SK-N-SH (cell line): ENCODE measurements at regions of chr3 and their contacts with region 1.

Region 1: DNA sequence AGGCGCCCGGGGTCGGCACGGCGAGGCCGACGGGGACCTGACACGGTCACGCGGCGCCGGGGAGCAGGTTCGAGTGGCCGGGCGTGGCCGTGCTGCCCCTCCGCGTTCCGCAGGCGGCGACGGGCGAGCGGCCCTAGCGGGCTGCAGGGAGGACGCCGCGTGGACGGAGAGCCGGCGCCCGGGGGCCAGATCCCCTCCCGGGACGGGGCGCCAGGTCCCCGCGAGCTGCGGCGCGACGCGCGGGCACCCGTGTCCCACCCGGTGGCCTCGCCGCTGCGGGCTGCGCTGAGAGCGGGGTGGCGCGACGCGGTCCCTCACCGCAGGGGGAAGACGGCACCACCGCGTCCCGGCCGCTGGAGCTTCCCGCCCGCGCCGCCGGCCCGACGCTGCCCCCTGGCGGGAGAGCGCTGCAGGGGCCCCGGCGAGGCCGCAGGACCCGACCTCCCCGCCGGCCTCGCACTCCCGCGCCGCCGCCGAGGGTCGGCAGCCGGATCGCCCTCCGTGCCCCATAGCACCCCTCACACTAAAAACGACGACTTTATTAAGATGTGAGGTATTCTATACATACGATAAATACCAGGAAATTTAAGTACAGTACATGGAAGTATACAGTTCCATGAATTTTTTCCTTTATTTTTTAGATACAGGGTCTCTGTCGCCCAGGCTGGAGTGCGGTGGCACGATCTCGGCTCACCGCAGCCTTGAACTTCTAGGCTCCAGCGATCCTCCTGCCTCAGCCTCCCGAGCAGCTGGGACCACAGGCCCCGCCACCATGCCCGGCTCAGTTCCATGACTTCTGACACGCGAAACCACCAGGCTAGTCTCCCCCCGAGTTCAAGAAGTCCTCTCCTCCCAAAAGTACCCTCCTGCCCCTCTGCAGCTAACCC is 1.3 kb upstream of the PIGZ start:
- DNase-seq: peak; percentile 97
- H3K4me3 ChIP-seq: peak overlapping the region; percentile 64 to 76
- H3K27ac ChIP-seq: no peak overlapping the region
- H3K4me1 ChIP-seq: peaks cover 0 to 6% of the 10 kb centered on the region in 2 experiments; a peak in 1 of 4 replicates
- H3K27me3 ChIP-seq: no peaks in the 10 kb centered on the region
- CTCF ChIP-seq: peak; percentile 65
- EP300 ChIP-seq: no peak; a peak in 1 of 4 replicates
- RAD21 ChIP-seq: peak; percentile 65

Region 2: GRCh38 chr3:196609343-196609775 is 360.5 kb before region 1 on chr3:
- CTCF ChIA-PET with region 1: interaction called, 12 read pairs
- POLR2A ChIA-PET with region 1: no interaction called
- DNase-seq: peak; percentile 92
- H3K4me3 ChIP-seq: no peak overlapping the region; a peak in 1 of 4 replicates
- H3K27ac ChIP-seq: no peak overlapping the region
- H3K4me1 ChIP-seq: peaks cover 7 to 9% of the 10 kb centered on the region in 2 experiments; a peak in 2 of 4 replicates
- H3K27me3 ChIP-seq: no peaks in the 10 kb centered on the region
- CTCF ChIP-seq: peak; percentile 85
- EP300 ChIP-seq: no peak
- RAD21 ChIP-seq: peak; percentile 90

Region 3: DNA sequence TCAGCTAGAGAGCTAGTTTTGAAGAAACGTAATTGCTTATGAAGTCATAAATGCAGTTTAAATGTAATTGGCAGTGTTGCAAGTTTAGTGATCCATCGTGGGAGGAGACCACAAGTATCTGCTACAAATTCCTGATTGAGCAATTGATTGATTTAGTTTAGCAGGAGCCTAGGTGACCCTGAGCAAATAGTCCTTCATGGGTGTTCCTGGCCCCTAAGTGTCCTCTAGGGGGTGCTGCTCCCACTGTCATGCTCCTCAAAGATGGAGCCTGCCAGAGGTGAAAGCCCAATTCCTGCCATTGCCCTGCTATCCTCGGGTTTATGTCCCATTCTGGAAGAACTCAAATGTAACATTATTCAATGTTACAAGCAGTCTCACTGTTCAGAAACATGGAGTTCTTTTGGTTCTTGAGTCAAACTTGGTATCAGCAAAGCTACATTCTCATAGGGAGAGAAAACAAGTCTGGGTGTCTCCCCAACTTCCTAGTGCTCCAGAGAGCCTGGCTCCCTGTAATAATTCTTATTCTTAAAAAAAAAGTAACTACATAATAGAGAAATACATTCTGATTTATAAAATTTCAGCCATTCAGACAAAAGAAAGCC is 132.0 kb before region 1 on chr3:
- CTCF ChIA-PET with region 1: interaction called, 12 read pairs
- POLR2A ChIA-PET with region 1: no interaction called
- DNase-seq: peak; percentile 70
- H3K4me3 ChIP-seq: no peak overlapping the region
- H3K27ac ChIP-seq: no peak overlapping the region
- H3K4me1 ChIP-seq: no peaks in the 10 kb centered on the region
- H3K27me3 ChIP-seq: no peaks in the 10 kb centered on the region
- CTCF ChIP-seq: peak; percentile 74
- EP300 ChIP-seq: no peak
- RAD21 ChIP-seq: peak; percentile 66

Region 4: GRCh38 chr3:196942226-196942914 is 27.5 kb before region 1 on chr3 and contains the start of gene NCBP2:
- CTCF ChIA-PET with region 1: interaction called, 16 read pairs
- POLR2A ChIA-PET with region 1: interaction called, 4 read pairs
- DNase-seq: peak; percentile 96
- H3K4me3 ChIP-seq: peak within 1 kb of the TSS; percentile 95 to 96
- H3K27ac ChIP-seq: peak within 1 kb of the TSS; percentile 97 to 99
- H3K4me1 ChIP-seq: peaks cover 6 to 11% of the 10 kb centered on the region in 2 experiments; a peak in 3 of 4 replicates
- H3K27me3 ChIP-seq: no peaks in the 10 kb centered on the region
- CTCF ChIP-seq: peak; percentile 64
- EP300 ChIP-seq: no peak
- RAD21 ChIP-seq: peak; percentile 43
- polyA plus RNA-seq, gene NCBP2: 112 and 128 TPM in 2 replicates

Region 5: GRCh38 chr3:196951371-196951770 is 18.5 kb before region 1 on chr3:
- CTCF ChIA-PET with region 1: interaction called, 26 read pairs
- POLR2A ChIA-PET with region 1: no interaction called
- DNase-seq: no peak
- H3K4me3 ChIP-seq: no peak overlapping the region
- H3K27ac ChIP-seq: no peak overlapping the region
- H3K4me1 ChIP-seq: no peaks in the 10 kb centered on the region
- H3K27me3 ChIP-seq: no peaks in the 10 kb centered on the region
- CTCF ChIP-seq: no peak
- EP300 ChIP-seq: no peak
- RAD21 ChIP-seq: no peak

Region 6: GRCh38 chr3:196989721-196990271 is 19.9 kb after region 1 on chr3:
- CTCF ChIA-PET with region 1: interaction called, 12 read pairs
- POLR2A ChIA-PET with region 1: no interaction called
- DNase-seq: no peak
- H3K4me3 ChIP-seq: no peak overlapping the region
- H3K27ac ChIP-seq: no peak overlapping the region
- H3K4me1 ChIP-seq: peaks cover 0 to 11% of the 10 kb centered on the region in 2 experiments; a peak in 1 of 4 replicates
- H3K27me3 ChIP-seq: no peaks in the 10 kb centered on the region; the same call in 1 of the 2 replicates
- CTCF ChIP-seq: no peak
- EP300 ChIP-seq: no peak
- RAD21 ChIP-seq: no peak

Region 7: DNA sequence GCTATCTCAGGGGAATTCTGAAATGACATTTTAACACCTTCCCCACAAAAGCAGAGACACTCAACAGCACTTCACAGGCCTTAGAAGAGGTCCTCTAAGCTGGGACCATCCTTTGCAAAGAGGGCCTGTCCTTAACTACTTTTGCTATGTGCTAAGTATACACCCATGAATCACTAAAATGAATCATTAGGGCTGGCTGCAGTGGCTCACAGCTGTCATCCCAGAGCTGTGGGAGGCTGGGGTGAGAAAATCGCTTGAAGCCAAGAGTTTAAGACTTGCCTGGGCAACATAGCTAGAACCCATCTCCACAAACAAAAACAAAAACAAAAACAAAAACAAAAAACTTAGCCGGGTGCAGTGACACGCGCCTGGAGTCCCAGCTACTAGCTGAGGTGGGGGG is 113.6 kb after region 1 on chr3:
- CTCF ChIA-PET with region 1: no interaction called
- POLR2A ChIA-PET with region 1: no interaction called
- DNase-seq: no peak
- H3K4me3 ChIP-seq: no peak overlapping the region
- H3K27ac ChIP-seq: peak overlapping the region in 1 of 2 experiments; percentile 71; a peak in 2 of 4 replicates
- H3K4me1 ChIP-seq: peaks cover 0 to 6% of the 10 kb centered on the region in 2 experiments; a peak in 2 of 4 replicates
- H3K27me3 ChIP-seq: no peaks in the 10 kb centered on the region
- CTCF ChIP-seq: no peak
- EP300 ChIP-seq: no peak
- RAD21 ChIP-seq: no peak

Region 8: GRCh38 chr3:197262709-197263108 is 292.8 kb after region 1 on chr3:
- CTCF ChIA-PET with region 1: no interaction called
- POLR2A ChIA-PET with region 1: no interaction called
- DNase-seq: no peak
- H3K4me3 ChIP-seq: no peak overlapping the region
- H3K27ac ChIP-seq: no peak overlapping the region
- H3K4me1 ChIP-seq: peaks cover 0 to 2% of the 10 kb centered on the region in 2 experiments; a peak in 2 of 4 replicates
- H3K27me3 ChIP-seq: no peaks in the 10 kb centered on the region
- CTCF ChIP-seq: no peak
- EP300 ChIP-seq: no peak
- RAD21 ChIP-seq: no peak